Heart left ventricle (tissue), 16 donors: ENCODE measurements at regions of chr3 and their contacts with region 1.

Region 1: DNA sequence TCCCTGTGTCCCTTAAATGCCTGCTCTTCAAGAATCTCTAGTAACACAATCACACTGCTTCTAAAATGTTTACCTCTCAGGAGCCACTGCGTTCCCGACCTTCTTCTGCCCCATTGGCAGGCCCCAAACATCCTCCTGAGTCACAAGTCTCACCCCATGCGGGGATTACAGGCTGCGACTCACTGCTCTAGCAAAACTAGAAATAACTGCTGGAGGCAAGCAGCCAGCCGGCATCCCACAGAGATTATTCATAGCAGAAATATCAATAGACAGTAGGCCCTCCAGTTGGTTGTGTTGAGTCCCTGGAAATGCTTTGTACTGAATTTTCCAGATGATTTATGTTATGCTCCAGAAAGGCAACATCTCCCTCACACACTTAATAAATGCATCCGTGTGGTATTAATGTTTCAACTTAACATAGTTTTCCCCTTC is 64.8 kb downstream of the RFTN1 start:
- DNase-seq: peak; percentile 63 to 81 (median 73)
- ATAC-seq: peak; percentile 58 to 90 (median 80)
- H3K4me3 ChIP-seq: no peak overlapping the region
- H3K27ac ChIP-seq: peak overlapping the region in 11 of 12 donors; percentile 0 to 66 (median 51)
- H3K4me1 ChIP-seq: peaks cover 4 to 37% (median 25%) of the 10 kb centered on the region in 12 donors
- H3K27me3 ChIP-seq: no peaks in the 10 kb centered on the region
- CTCF ChIP-seq: no peak
- POLR2A ChIP-seq: no peak

Region 2: DNA sequence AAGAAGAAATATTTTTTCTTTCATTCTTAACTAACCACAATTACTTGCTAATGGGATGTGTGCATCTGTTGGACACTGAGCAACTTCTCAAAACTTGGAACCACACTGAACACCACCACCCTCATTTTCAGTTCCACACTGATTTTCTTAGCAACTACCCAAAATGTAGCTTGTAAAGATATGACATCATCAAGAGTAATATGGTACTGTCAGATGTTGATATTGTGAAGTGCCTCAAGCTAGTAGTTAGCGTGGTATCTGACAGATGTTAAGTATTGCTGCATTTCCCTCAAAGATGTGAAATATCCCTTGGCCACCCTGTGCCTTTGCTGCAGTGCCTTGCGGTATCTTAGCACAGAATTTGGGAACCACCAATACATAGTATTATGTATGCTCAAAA is 55.6 kb after region 1 on chr3:
- intact Hi-C with region 1: loop called in 2 of 10 experiments (anchors 5 to 10 kb)
- DNase-seq: no peak
- ATAC-seq: peak in 1 of 4 donors; percentile 31
- H3K4me3 ChIP-seq: no peak overlapping the region
- H3K27ac ChIP-seq: peak overlapping the region in 1 of 12 donors; percentile 23
- H3K4me1 ChIP-seq: peaks cover 0 to 68% (median 15%) of the 10 kb centered on the region in 12 donors
- H3K27me3 ChIP-seq: no peaks in the 10 kb centered on the region
- CTCF ChIP-seq: no peak
- POLR2A ChIP-seq: no peak

Region 3: GRCh38 chr3:16546186-16547010 is 97.7 kb after region 1 on chr3:
- intact Hi-C with region 1: no loop called
- DNase-seq: peak in 3 of 5 donors; percentile 36 to 65 (median 36)
- ATAC-seq: peak; percentile 73 to 87 (median 84)
- H3K4me3 ChIP-seq: no peak overlapping the region
- H3K27ac ChIP-seq: peak overlapping the region; percentile 52 to 87 (median 80)
- H3K4me1 ChIP-seq: peaks cover 0 to 47% (median 14%) of the 10 kb centered on the region in 12 donors
- H3K27me3 ChIP-seq: peaks cover 0 to 4% (median 0%) of the 10 kb centered on the region in 9 donors
- CTCF ChIP-seq: no peak
- POLR2A ChIP-seq: no peak

Region 4: GRCh38 chr3:16801698-16802097 is 353.0 kb after region 1 on chr3:
- intact Hi-C with region 1: no loop called
- DNase-seq: no peak
- ATAC-seq: peak in 2 of 4 donors; percentile 38 to 55
- H3K4me3 ChIP-seq: no peak overlapping the region
- H3K27ac ChIP-seq: peak overlapping the region in 6 of 12 donors; percentile 6 to 71 (median 22)
- H3K4me1 ChIP-seq: peaks cover 0 to 49% (median 12%) of the 10 kb centered on the region in 12 donors
- H3K27me3 ChIP-seq: no peaks in the 10 kb centered on the region
- CTCF ChIP-seq: no peak
- POLR2A ChIP-seq: no peak